AG04449 (cell line): ENCODE measurements at regions of chr5 and their contacts with region 1.

Region 1: DNA sequence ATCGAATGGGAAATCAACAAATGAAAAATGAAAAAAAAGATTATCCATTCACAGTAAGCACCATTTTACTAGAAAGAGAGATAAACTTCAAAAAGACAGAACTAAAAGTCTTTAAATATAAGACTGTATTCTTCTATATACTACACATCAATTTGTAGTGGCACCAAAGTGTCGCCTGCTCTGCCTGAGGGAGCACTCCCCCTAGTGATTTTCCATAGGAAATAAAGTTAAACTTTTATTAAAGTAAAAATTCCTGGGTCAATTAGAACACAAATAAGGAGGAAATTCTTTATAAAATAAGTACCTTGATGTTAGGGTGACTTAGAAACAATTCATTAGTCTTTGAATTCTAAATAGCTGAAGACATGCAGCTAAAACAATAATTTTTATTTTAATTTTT is 9.7 kb downstream of the RAD1 start:
- DNase-seq: no peak
- H3K4me3 ChIP-seq: no peak overlapping the region
- CTCF ChIP-seq: no peak

Region 2: GRCh38 chr5:34891981-34892380 is 13.6 kb before region 1 on chr5:
- CTCF ChIA-PET with region 1: interaction called, 40 read pairs
- POLR2A ChIA-PET with region 1: no interaction called
- DNase-seq: peak; percentile 81
- H3K4me3 ChIP-seq: no peak overlapping the region
- CTCF ChIP-seq: no peak